ENCODE measurements at regions of chr15 and their contacts with region 1.

Region 1: GRCh38 chr15:50260969-50261496 is 4.5 kb downstream of the HDC start:
- DNase-seq: no peak
- ATAC-seq: peak; percentile 17
- H3K4me3 Mint-ChIP-seq: peak overlapping the region; percentile 37
- H3K27ac Mint-ChIP-seq: peak overlapping the region; percentile 95
- H3K4me1 Mint-ChIP-seq: peaks cover 69% of the 10 kb centered on the region
- H3K27me3 Mint-ChIP-seq: no peaks in the 10 kb centered on the region

Region 2: DNA sequence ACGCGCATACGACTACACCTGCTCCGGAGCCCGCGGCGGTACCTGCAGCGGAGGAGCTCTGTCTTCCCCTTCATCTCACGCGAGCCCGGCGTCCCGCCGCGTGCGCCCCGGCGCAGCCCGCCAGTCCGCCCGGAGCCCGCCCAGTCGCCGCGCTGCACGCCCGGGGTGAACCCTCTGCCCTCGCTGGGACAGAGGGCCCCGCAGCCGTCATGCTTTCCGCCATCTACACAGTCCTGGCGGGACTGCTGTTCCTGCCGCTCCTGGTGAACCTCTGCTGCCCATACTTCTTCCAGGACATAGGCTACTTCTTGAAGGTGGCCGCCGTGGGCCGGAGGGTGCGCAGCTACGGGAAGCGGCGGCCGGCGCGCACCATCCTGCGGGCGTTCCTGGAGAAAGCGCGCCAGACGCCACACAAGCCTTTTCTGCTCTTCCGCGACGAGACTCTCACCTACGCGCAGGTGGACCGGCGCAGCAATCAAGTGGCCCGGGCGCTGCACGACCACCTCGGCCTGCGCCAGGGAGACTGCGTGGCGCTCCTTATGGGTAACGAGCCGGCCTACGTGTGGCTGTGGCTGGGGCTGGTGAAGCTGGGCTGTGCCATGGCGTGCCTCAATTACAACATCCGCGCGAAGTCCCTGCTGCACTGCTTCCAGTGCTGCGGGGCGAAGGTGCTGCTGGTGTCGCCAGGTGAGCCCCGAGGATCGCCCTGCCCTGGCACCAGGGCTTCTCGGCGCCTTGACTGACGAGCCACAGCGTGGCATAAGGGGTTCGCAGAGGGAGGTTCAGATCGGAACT is 78.6 kb before region 1 on chr15:
- CTCF ChIA-PET with region 1: interaction called, 3 read pairs
- POLR2A ChIA-PET with region 1: interaction called, 6 read pairs
- intact Hi-C with region 1: loop called (anchors 1 to 2 kb)
- DNase-seq: peak; percentile 73
- ATAC-seq: peak; percentile 68
- H3K4me3 Mint-ChIP-seq: peak overlapping the region; percentile 85
- H3K27ac Mint-ChIP-seq: peak overlapping the region; percentile 88
- H3K4me1 Mint-ChIP-seq: peaks cover 21% of the 10 kb centered on the region
- H3K27me3 Mint-ChIP-seq: peaks cover 27% of the 10 kb centered on the region

Region 3: GRCh38 chr15:50247819-50248655 is 13.0 kb before region 1 on chr15:
- CTCF ChIA-PET with region 1: interaction called, 32 read pairs
- POLR2A ChIA-PET with region 1: interaction called, 34 read pairs
- intact Hi-C with region 1: loop called (anchors 1 kb)
- DNase-seq: peak; percentile 83
- ATAC-seq: peak; percentile 99
- H3K4me3 Mint-ChIP-seq: peak overlapping the region; percentile 67
- H3K27ac Mint-ChIP-seq: peak overlapping the region; percentile 96
- H3K4me1 Mint-ChIP-seq: peaks cover 33% of the 10 kb centered on the region
- H3K27me3 Mint-ChIP-seq: no peaks in the 10 kb centered on the region

Region 4: DNA sequence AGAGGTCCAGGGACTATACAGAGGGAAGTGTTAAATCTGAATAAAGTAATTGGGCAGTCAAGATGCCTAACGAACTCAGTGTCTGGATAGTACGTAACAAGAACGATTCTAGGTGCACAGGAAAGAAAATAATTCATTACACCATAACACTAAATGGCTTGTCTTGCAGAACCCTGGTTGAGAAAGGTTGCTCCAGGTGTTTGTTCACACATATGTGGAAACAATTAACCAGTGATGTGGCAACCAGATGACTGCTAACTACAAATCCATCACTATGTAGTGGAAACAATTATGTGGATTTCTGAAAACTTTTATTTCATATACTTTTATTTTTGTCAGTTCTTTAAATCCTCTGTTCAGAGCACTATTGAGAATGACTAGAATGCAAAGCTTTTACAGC is 14.9 kb after region 1 on chr15:
- CTCF ChIA-PET with region 1: interaction called, 6 read pairs
- POLR2A ChIA-PET with region 1: no interaction called
- intact Hi-C with region 1: loop called in 1 of 2 experiments (anchors 1 kb)
- DNase-seq: no peak
- ATAC-seq: peak; percentile 65
- H3K4me3 Mint-ChIP-seq: no peak overlapping the region
- H3K27ac Mint-ChIP-seq: peak overlapping the region; percentile 41
- H3K4me1 Mint-ChIP-seq: peaks cover 23% of the 10 kb centered on the region
- H3K27me3 Mint-ChIP-seq: no peaks in the 10 kb centered on the region

Region 5: GRCh38 chr15:50798684-50799083 is 537.7 kb after region 1 on chr15:
- CTCF ChIA-PET with region 1: no interaction called
- POLR2A ChIA-PET with region 1: no interaction called
- intact Hi-C with region 1: no loop called
- DNase-seq: peak; percentile 11
- ATAC-seq: no peak
- H3K4me3 Mint-ChIP-seq: no peak overlapping the region
- H3K27ac Mint-ChIP-seq: no peak overlapping the region
- H3K4me1 Mint-ChIP-seq: peaks cover 5% of the 10 kb centered on the region
- H3K27me3 Mint-ChIP-seq: no peaks in the 10 kb centered on the region